ENCODE measurements at regions of chr10 and their contacts with region 1.

Region 1: GRCh38 chr10:59906417-59907202 is at the start of gene CCDC6:
- DNase-seq: peak; percentile 98
- total RNA-seq, gene CCDC6: 60.4 to 64.3 TPM

Region 2: GRCh38 chr10:59611043-59611442 is 295.6 kb before region 1 on chr10:
- intact Hi-C with region 1: no loop called
- DNase-seq: no peak

Region 3: GRCh38 chr10:59847326-59847725 is 59.3 kb before region 1 on chr10:
- intact Hi-C with region 1: loop called in 1 of 2 experiments (anchors 10 kb)
- DNase-seq: no peak

Measured in posterior vena cava (tissue), 2 donors.